ENCODE measurements at regions of chr13 and their contacts with region 1.

Region 1: GRCh38 chr13:111046590-111047141 is 68.4 kb upstream of the ARHGEF7 start:
- DNase-seq: no peak
- H3K4me3 ChIP-seq: no peak overlapping the region
- H3K27ac ChIP-seq: peak overlapping the region in 2 of 4 donors; percentile 16 to 42
- H3K4me1 ChIP-seq: peaks cover 0 to 14% (median 0%) of the 10 kb centered on the region in 3 donors
- H3K27me3 ChIP-seq: peaks cover 0 to 5% (median 0%) of the 10 kb centered on the region in 4 donors
- CTCF ChIP-seq: peak in 2 of 6 experiments; percentile 21 to 27
- POLR2A ChIP-seq: no peak

Region 2: GRCh38 chr13:110944121-110944967 is 102.3 kb before region 1 on chr13:
- intact Hi-C with region 1: loop called (anchors 10 kb)
- DNase-seq: no peak
- H3K4me3 ChIP-seq: no peak overlapping the region
- H3K27ac ChIP-seq: no peak overlapping the region
- H3K4me1 ChIP-seq: no peaks in the 10 kb centered on the region
- H3K27me3 ChIP-seq: no peaks in the 10 kb centered on the region
- CTCF ChIP-seq: peak in 5 of 6 experiments; percentile 44 to 71 (median 55)
- POLR2A ChIP-seq: no peak

Region 3: DNA sequence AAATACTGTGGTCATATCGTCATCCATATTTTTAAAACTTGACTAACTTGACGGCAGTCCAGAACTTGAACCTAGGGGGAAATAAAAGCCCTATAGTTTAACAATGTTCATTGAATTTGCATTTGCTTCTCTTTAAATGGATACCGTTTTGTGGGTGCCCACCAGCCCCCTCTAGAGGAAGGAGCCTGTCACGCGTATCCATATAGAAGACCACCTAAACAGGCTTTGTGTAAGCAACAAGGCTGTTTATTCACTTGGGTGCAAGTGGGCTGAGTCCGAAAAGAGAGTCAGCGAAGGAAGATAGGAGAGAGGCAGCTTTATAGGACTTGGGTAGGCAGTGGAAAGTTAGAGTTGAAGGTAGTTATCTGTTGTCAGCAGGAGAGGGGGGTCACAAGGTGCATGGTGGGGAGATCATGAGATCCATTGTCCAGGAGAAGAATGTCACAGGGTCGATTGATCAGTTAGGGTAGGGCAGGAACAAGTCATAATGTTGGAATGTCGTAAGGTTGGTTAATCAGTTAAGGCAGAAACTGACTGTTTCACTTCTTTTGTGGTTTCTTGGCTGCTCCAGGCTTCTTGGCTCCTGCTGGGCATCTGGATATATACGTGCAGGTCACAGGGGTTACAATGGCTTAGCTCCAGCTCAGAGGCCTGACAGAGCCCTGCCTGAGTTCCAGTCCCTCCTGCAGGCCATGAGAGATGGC is 89.3 kb before region 1 on chr13:
- intact Hi-C with region 1: no loop called
- DNase-seq: no peak
- H3K4me3 ChIP-seq: no peak overlapping the region
- H3K27ac ChIP-seq: no peak overlapping the region
- H3K4me1 ChIP-seq: peaks cover 0 to 15% (median 0%) of the 10 kb centered on the region in 3 donors
- H3K27me3 ChIP-seq: no peaks in the 10 kb centered on the region
- CTCF ChIP-seq: no peak
- POLR2A ChIP-seq: no peak

Measured in esophagus squamous epithelium (tissue), 5 donors.